ENCODE measurements at regions of chrX and their contacts with region 1.

Region 1: GRCh38 chrX:31036895-31037294 is 34.9 kb downstream of the FTHL17 start:
- DNase-seq: no peak
- ATAC-seq: peak; percentile 42
- H3K4me3 Mint-ChIP-seq: no peak overlapping the region
- H3K27ac Mint-ChIP-seq: no peak overlapping the region
- H3K4me1 Mint-ChIP-seq: peaks cover 2% of the 10 kb centered on the region
- H3K27me3 Mint-ChIP-seq: no peaks in the 10 kb centered on the region
- CTCF ChIP-seq: no peak

Region 2: DNA sequence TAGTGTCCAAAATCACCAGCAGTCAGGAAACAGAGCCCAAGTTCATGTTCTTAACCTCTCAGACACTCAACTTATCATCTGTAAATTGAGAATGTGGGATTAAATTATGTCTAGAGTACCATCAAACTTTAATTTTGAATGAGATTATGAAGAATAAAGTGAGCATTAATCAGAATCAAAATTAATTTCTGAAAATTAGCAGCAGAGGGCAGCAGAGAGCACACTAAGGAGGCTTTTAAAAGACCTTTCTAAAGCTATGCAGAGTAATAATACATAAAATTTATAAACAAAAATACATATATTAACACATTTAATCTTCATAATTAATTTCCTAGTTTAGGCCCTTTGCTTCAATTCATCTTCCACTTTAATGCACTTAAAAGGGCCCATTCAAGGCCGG is 466.4 kb before region 1 on chrX:
- CTCF ChIA-PET with region 1: no interaction called
- POLR2A ChIA-PET with region 1: no interaction called
- intact Hi-C with region 1: no loop called
- DNase-seq: no peak
- ATAC-seq: no peak
- H3K4me3 Mint-ChIP-seq: no peak overlapping the region
- H3K27ac Mint-ChIP-seq: no peak overlapping the region
- H3K4me1 Mint-ChIP-seq: peaks cover 57% of the 10 kb centered on the region
- H3K27me3 Mint-ChIP-seq: no peaks in the 10 kb centered on the region
- CTCF ChIP-seq: no peak

Region 3: GRCh38 chrX:31279359-31279758 is 242.5 kb after region 1 on chrX:
- CTCF ChIA-PET with region 1: interaction called, 11 read pairs
- POLR2A ChIA-PET with region 1: no interaction called
- intact Hi-C with region 1: no loop called
- DNase-seq: no peak
- ATAC-seq: no peak
- H3K4me3 Mint-ChIP-seq: no peak overlapping the region
- H3K27ac Mint-ChIP-seq: no peak overlapping the region
- H3K4me1 Mint-ChIP-seq: no peaks in the 10 kb centered on the region
- H3K27me3 Mint-ChIP-seq: no peaks in the 10 kb centered on the region
- CTCF ChIP-seq: no peak

Region 4: GRCh38 chrX:31293409-31293808 is 256.5 kb after region 1 on chrX:
- CTCF ChIA-PET with region 1: interaction called, 110 read pairs
- POLR2A ChIA-PET with region 1: no interaction called
- intact Hi-C with region 1: loop called (anchors 1 kb)
- DNase-seq: no peak
- ATAC-seq: peak; percentile 58
- H3K4me3 Mint-ChIP-seq: no peak overlapping the region
- H3K27ac Mint-ChIP-seq: no peak overlapping the region
- H3K4me1 Mint-ChIP-seq: no peaks in the 10 kb centered on the region
- H3K27me3 Mint-ChIP-seq: no peaks in the 10 kb centered on the region
- CTCF ChIP-seq: no peak

Region 5: DNA sequence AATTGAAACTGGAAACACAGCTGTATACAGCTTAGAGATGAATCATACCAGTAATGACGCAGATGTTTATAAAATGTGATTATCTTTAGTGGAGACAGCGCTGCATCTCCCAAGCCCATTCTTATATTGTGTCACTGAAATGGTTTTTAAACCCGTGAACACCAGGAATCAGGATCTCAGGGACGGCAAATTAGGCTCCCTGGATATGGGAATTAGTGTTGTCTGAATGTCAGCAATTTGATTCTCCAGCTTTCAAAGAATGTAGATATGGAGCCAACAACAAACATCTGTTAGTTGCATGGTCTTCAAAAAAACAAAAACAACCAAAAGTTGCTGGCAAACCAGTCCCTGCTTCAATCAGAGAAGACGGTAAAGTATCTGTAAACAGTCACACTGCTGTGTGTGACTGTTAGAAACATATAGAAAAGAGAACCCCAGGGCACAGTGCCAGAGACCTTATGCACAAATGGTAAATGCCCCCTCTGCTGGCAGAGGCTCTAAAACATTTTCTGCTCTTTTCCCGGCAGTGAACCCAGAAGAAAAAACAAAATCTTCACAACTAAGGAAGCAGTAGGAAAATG is 386.8 kb after region 1 on chrX:
- CTCF ChIA-PET with region 1: interaction called, 8 read pairs
- POLR2A ChIA-PET with region 1: no interaction called
- intact Hi-C with region 1: loop called (anchors 1 kb)
- DNase-seq: no peak
- ATAC-seq: no peak
- H3K4me3 Mint-ChIP-seq: no peak overlapping the region
- H3K27ac Mint-ChIP-seq: no peak overlapping the region
- H3K4me1 Mint-ChIP-seq: peaks cover 7% of the 10 kb centered on the region
- H3K27me3 Mint-ChIP-seq: no peaks in the 10 kb centered on the region
- CTCF ChIP-seq: no peak

Region 6: GRCh38 chrX:31658360-31658759 is 621.5 kb after region 1 on chrX:
- CTCF ChIA-PET with region 1: interaction called, 30 read pairs
- POLR2A ChIA-PET with region 1: no interaction called
- intact Hi-C with region 1: loop called (anchors 1 kb)
- DNase-seq: no peak
- ATAC-seq: no peak
- H3K4me3 Mint-ChIP-seq: no peak overlapping the region
- H3K27ac Mint-ChIP-seq: no peak overlapping the region
- H3K4me1 Mint-ChIP-seq: no peaks in the 10 kb centered on the region
- H3K27me3 Mint-ChIP-seq: no peaks in the 10 kb centered on the region
- CTCF ChIP-seq: no peak